A549 (cell line): ENCODE measurements at regions of chr11 and their contacts with region 1.

Region 1: GRCh38 chr11:65988791-65989592 is 13.0 kb downstream of the EIF1AD start:
- DNase-seq: peak; percentile 89 to 96
- ATAC-seq: peak; percentile 96 to 98
- H3K4me3 ChIP-seq: no peak overlapping the region
- H3K27ac ChIP-seq: no peak overlapping the region
- H3K4me1 ChIP-seq: no peaks in the 10 kb centered on the region
- CTCF ChIP-seq: peak; percentile 99
- EP300 ChIP-seq: no peak
- POLR2A ChIP-seq: no peak
- RAD21 ChIP-seq: peak; percentile 95 to 98

Region 2: GRCh38 chr11:65850831-65851811 is 137.9 kb before region 1 on chr11:
- CTCF ChIA-PET with region 1: interaction called, 10 read pairs
- POLR2A ChIA-PET with region 1: no interaction called
- DNase-seq: peak in 1 of 2 experiments; percentile 72
- ATAC-seq: peak; percentile 33 to 60
- H3K4me3 ChIP-seq: no peak overlapping the region
- H3K27ac ChIP-seq: no peak overlapping the region
- H3K4me1 ChIP-seq: peaks cover 21% of the 10 kb centered on the region
- CTCF ChIP-seq: peak; percentile 35; the same call in 2 of the 3 replicates
- EP300 ChIP-seq: no peak
- POLR2A ChIP-seq: no peak
- RAD21 ChIP-seq: no peak

Region 3: GRCh38 chr11:65968600-65969482 is 20.2 kb before region 1 on chr11:
- CTCF ChIA-PET with region 1: interaction called, 15 read pairs
- POLR2A ChIA-PET with region 1: no interaction called
- DNase-seq: no peak
- ATAC-seq: peak; percentile 37 to 56; a peak in 3 of 6 replicates
- H3K4me3 ChIP-seq: no peak overlapping the region
- H3K27ac ChIP-seq: no peak overlapping the region
- H3K4me1 ChIP-seq: no peaks in the 10 kb centered on the region; the same call in 2 of the 3 replicates
- CTCF ChIP-seq: no peak
- EP300 ChIP-seq: no peak
- POLR2A ChIP-seq: no peak
- RAD21 ChIP-seq: no peak

Region 4: DNA sequence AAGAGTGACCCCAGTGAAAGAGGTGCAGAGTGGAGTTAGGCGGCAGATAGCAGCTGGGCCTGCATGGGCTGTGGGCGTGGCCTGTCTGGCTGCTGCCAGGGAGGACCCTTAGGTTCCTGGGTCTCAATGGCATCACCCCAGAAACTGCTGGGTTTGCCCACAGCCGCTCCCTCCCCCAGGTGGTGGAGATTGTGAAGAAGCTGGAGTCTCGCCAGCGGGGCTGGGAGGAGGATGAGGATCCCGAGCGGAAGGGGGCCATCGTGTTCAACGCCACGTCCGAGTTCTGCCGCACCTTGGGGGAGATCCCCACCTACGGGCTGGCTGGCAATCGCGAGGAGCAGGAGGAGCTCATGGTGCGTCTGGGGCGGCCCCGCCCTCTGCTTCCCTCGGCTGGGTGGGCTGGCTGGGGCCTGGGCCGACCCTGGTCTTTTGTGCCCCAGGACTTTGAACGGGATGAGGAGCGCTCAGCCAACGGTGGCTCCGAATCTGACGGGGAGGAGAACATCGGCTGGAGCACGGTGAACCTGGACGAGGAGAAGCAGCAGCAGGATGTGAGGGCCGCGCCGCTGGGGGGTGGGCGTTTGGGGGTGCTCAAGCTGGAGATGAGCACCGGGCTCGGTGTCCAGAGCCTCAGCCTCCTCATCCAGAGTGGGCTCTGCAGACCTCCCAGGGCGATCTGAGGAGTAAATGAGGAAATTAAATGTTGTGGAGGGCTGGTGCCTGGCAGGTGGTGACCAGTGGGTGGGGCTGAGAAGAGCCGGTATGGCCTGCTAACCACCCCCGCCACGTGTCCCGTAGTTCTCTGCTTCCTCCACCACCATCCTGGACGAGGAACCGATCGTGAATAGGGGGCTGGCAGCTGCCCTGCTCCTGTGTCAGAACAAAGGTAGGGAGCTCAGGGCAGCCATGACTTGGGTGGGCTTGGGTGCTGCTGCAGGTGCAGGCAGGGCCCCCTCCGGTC is 12.5 kb before region 1 on chr11:
- CTCF ChIA-PET with region 1: interaction called, 41 read pairs
- POLR2A ChIA-PET with region 1: interaction called, 5 read pairs
- DNase-seq: no peak
- ATAC-seq: no peak
- H3K4me3 ChIP-seq: no peak overlapping the region
- H3K27ac ChIP-seq: no peak overlapping the region
- H3K4me1 ChIP-seq: no peaks in the 10 kb centered on the region
- CTCF ChIP-seq: no peak
- EP300 ChIP-seq: no peak
- POLR2A ChIP-seq: no peak
- RAD21 ChIP-seq: no peak

Region 5: DNA sequence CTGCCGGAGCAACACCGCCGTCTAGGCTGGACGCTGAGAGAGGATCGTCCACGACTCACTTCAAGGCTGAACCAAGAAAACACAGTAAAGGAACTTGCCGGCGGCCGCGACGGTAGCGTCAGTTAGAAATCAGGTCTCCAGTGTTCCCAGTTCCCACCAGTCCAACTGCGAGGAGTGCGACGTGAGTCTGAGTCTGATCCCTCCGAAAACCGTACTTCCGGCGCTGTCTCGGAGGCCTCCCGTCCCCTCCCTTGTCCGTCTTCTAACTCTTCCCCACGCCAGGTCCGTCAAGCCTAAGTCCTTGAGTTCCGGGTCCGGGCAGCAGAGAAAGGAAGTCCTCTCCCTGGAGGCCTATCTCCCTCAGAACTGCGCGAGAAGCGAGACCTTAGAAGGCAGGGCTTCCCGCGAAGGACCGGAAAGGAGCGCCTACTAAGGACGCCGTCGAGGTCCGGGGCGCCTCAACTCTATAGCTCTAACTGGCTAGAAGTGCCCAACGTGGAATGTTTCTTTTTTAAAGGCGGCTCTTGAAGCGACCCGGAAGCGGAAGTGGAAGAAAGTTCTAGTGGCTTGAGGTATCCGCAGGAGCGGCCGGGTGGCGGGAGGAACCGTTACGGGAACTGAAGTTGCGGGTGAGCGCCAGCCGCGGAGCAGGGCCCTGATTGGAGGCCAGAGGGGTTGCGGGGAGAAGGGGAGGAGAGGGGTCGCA is 13.1 kb after region 1 on chr11 and contains the starts of genes BANF1 and EIF1AD:
- CTCF ChIA-PET with region 1: interaction called, 10 read pairs
- POLR2A ChIA-PET with region 1: no interaction called
- DNase-seq: peak; percentile 92 to 99
- ATAC-seq: peak; percentile 85 to 91
- H3K4me3 ChIP-seq: peak within 1 kb of the TSS; percentile 67
- H3K27ac ChIP-seq: peak within 1 kb of the TSS; percentile 91 to 95
- H3K4me1 ChIP-seq: peaks cover 13% of the 10 kb centered on the region; the same call in 2 of the 3 replicates
- CTCF ChIP-seq: no peak
- EP300 ChIP-seq: no peak; a peak in 1 of 5 replicates
- POLR2A ChIP-seq: peak; percentile 92
- RAD21 ChIP-seq: 0 out of 5 replicates have a peak, but pooled peaks of 1 of the 2 experiments have one; percentile 7
- polyA plus RNA-seq, gene BANF1: 385 and 399 TPM in 2 replicates
- polyA plus RNA-seq, gene EIF1AD: 38.6 and 42.0 TPM in 2 replicates

Region 6: DNA sequence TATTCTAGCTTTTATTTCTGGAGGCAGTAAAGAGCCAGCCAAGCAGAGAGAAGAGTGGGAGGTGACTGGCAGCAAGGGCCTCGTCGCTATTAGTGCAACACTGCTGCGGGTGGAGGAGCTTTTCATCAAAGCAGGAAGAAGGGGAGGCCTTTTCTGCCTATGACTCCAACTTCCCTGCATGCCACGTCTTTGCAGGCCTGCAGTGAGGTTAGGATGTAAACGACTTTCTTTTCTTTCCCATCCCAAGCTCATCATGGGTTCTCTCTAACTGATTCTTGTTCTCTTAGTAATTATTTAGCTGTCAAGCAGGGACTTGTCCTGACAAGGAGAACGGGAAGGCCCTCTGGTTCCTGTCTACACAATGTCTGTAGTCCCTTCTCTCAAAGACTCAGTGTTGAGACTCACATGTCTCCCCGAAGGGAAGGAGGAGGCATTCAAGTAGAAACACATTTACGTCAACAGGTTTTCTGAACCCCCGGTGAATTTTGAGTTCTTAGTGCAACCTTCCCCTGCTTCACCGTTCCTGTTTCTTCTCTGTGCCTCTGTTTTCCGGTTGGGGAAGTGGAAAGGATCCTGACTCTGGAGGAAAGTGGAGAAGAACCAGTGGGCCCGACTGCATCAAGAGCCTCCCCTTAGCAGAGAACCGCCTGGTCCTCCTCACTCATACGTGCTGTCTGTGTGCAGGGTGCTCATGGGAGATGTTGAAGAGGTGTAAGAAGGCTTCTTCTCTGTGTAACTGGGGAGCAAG is 138.0 kb after region 1 on chr11:
- CTCF ChIA-PET with region 1: no interaction called
- POLR2A ChIA-PET with region 1: no interaction called
- DNase-seq: no peak
- ATAC-seq: peak; percentile 55 to 64
- H3K4me3 ChIP-seq: no peak overlapping the region
- H3K27ac ChIP-seq: peak overlapping the region; percentile 73 to 93
- H3K4me1 ChIP-seq: peaks cover 60% of the 10 kb centered on the region
- CTCF ChIP-seq: no peak
- EP300 ChIP-seq: no peak
- POLR2A ChIP-seq: no peak
- RAD21 ChIP-seq: no peak; a peak in 1 of 5 replicates

Region 7: DNA sequence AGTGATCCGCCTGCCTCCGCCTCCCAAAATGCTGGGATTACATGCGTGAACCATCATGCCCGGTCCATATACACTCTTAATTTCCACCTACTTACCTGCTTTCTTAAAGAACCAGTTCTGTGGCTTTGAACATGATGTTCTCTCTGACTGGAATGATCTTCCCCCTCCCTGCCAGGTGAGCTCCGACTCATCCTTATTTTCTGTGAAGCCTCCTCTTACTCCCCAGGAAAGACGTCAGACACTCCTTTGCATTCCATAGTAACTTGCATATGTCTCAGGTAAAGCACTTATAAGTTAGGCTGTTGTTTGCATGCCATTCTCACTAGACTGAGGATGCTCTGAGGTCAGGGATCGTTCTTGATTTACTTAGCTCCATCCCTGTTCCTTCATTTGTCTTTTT is 187.7 kb after region 1 on chr11:
- CTCF ChIA-PET with region 1: no interaction called
- POLR2A ChIA-PET with region 1: no interaction called
- DNase-seq: no peak
- ATAC-seq: peak in 1 of 2 experiments; percentile 41; a peak in 3 of 6 replicates
- H3K4me3 ChIP-seq: no peak overlapping the region
- H3K27ac ChIP-seq: no peak overlapping the region
- H3K4me1 ChIP-seq: peaks cover 42% of the 10 kb centered on the region
- CTCF ChIP-seq: no peak
- EP300 ChIP-seq: no peak
- POLR2A ChIP-seq: no peak
- RAD21 ChIP-seq: no peak